ENCODE measurements at regions of chr16 and their contacts with region 1.

Region 1: DNA sequence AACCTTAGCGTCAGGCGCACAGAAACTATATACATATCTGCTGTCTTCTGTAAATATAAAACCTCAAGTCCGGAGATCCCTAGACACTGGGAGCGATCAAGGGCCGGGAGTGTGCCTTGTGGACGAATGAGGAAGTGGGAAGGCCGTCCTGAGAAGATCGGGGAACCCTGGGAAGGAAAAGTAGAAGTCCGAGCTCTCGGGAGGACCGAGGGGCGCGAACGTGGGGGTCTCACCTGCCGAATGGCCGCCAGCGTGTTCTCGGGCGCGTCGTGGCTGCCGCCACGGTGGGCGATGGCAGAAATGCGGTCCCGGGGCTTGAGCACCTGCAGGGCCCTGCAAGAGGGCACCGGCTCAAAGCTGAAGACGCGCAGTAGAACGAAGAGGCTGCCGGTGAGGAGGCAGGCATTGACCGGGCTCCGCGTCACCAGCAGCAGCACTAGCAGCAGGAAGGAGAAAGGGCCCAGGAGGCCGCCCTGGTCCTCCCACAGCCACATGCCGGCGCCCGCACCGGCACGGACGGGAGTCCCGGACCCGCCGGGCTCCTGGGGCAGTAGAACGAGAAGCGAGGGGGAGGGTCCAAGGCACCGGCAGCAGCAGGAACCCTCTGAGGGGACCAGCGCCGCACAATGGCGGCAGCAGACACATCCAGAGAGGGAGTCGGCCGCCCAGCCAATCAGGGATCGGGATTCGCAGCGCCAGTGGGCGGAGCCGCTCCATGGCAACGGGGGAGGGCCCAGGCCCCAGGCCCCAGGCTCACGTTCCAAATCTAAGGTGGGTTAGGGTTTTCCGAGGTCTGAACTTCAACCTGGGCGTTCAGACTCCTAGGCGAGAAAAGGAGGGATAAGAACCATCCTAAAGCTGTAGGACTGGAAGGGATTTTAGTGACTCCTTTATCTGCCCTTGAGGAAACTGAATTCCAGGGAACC is at the start of gene GDE1:
- DNase-seq: peak; percentile 91
- ATAC-seq: peak; percentile 78
- H3K4me3 ChIP-seq: peak within 1 kb of the TSS; percentile 56 to 87 (median 79)
- H3K4me3 Mint-ChIP-seq: peak within 1 kb of the TSS; percentile 95
- H3K27ac ChIP-seq: peak within 1 kb of the TSS; percentile 39 to 75
- H3K27ac Mint-ChIP-seq: peak within 1 kb of the TSS; percentile 89
- H3K4me1 ChIP-seq: peaks cover 19 to 37% of the 10 kb centered on the region in 2 donors
- H3K4me1 Mint-ChIP-seq: peaks cover 37% of the 10 kb centered on the region
- H3K27me3 ChIP-seq: no peaks in the 10 kb centered on the region
- H3K27me3 Mint-ChIP-seq: no peaks in the 10 kb centered on the region
- CTCF ChIP-seq: peak; percentile 21
- total RNA-seq, gene GDE1: 24.1 and 25.3 TPM in 2 replicates

Region 2: DNA sequence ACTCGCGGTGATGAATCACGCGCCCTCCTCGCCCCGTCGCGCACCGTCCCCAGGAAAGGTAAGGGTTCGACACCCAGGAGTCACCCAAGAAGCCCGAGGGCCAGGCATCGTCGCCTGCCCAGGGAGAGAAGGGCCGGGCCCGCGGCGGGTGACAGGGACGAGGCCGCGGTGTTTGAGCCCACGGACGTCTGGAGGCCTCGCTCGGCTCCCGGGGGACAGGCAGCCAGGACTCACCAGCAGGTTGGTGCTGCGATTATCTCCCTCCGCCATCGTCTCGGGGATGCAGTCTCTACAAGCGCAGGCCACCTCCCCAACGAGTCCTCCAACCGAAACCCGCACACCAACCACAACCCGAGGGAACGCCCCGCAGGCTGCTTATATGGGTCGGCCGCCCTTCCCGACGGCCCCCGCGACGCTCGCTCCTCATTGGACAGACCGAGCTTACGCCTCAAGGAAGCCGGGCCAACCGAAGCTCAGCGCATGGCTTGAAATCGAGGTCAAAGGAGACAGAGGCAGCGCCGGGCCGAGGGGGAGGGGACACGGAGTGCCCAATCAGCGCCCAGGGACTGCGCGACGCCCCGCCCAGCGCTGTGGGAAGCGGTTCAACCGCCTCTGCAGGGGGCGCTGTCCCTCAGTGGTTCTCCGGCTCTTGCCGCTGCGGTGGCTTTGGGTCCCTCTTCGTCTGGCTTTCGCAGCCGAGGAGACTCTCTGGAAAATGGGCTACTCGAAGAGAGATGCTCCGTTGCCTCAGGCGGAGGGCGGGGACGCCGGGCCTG is 720.3 kb before region 1 on chr16 and contains the start of gene ARL6IP1:
- CTCF ChIA-PET with region 1: no interaction called
- POLR2A ChIA-PET with region 1: no interaction called
- intact Hi-C with region 1: loop called (anchors 1 kb)
- DNase-seq: peak; percentile 100
- ATAC-seq: peak; percentile 96
- H3K4me3 ChIP-seq: peak within 1 kb of the TSS; percentile 76 to 94 (median 85)
- H3K4me3 Mint-ChIP-seq: peak within 1 kb of the TSS; percentile 92
- H3K27ac ChIP-seq: peak within 1 kb of the TSS; percentile 92 to 95
- H3K27ac Mint-ChIP-seq: peak within 1 kb of the TSS; percentile 95
- H3K4me1 ChIP-seq: peaks cover 16 to 21% of the 10 kb centered on the region in 2 donors
- H3K4me1 Mint-ChIP-seq: peaks cover 38% of the 10 kb centered on the region
- H3K27me3 ChIP-seq: no peaks in the 10 kb centered on the region
- H3K27me3 Mint-ChIP-seq: no peaks in the 10 kb centered on the region
- CTCF ChIP-seq: peak; percentile 96
- total RNA-seq, gene ARL6IP1: 106 and 109 TPM in 2 replicates

Region 3: GRCh38 chr16:18932243-18932981 is 589.3 kb before region 1 on chr16:
- CTCF ChIA-PET with region 1: no interaction called
- POLR2A ChIA-PET with region 1: no interaction called
- intact Hi-C with region 1: loop called (anchors 5 kb)
- DNase-seq: no peak
- ATAC-seq: no peak
- H3K4me3 ChIP-seq: no peak overlapping the region
- H3K4me3 Mint-ChIP-seq: peak overlapping the region; percentile 26
- H3K27ac ChIP-seq: peak overlapping the region in 1 of 2 donors; percentile 63
- H3K27ac Mint-ChIP-seq: peak overlapping the region; percentile 69
- H3K4me1 ChIP-seq: peaks cover 0 to 3% of the 10 kb centered on the region in 2 donors
- H3K4me1 Mint-ChIP-seq: peaks cover 19% of the 10 kb centered on the region
- H3K27me3 ChIP-seq: no peaks in the 10 kb centered on the region
- H3K27me3 Mint-ChIP-seq: peaks cover under 1% of the 10 kb centered on the region
- CTCF ChIP-seq: no peak

Region 4: GRCh38 chr16:19044769-19045168 is 477.0 kb before region 1 on chr16:
- CTCF ChIA-PET with region 1: no interaction called
- POLR2A ChIA-PET with region 1: no interaction called
- intact Hi-C with region 1: no loop called
- DNase-seq: no peak
- ATAC-seq: no peak
- H3K4me3 ChIP-seq: no peak overlapping the region
- H3K4me3 Mint-ChIP-seq: no peak overlapping the region
- H3K27ac ChIP-seq: no peak overlapping the region
- H3K27ac Mint-ChIP-seq: no peak overlapping the region
- H3K4me1 ChIP-seq: no peaks in the 10 kb centered on the region
- H3K4me1 Mint-ChIP-seq: no peaks in the 10 kb centered on the region
- H3K27me3 ChIP-seq: no peaks in the 10 kb centered on the region
- H3K27me3 Mint-ChIP-seq: peaks cover 6% of the 10 kb centered on the region
- CTCF ChIP-seq: no peak

Region 5: DNA sequence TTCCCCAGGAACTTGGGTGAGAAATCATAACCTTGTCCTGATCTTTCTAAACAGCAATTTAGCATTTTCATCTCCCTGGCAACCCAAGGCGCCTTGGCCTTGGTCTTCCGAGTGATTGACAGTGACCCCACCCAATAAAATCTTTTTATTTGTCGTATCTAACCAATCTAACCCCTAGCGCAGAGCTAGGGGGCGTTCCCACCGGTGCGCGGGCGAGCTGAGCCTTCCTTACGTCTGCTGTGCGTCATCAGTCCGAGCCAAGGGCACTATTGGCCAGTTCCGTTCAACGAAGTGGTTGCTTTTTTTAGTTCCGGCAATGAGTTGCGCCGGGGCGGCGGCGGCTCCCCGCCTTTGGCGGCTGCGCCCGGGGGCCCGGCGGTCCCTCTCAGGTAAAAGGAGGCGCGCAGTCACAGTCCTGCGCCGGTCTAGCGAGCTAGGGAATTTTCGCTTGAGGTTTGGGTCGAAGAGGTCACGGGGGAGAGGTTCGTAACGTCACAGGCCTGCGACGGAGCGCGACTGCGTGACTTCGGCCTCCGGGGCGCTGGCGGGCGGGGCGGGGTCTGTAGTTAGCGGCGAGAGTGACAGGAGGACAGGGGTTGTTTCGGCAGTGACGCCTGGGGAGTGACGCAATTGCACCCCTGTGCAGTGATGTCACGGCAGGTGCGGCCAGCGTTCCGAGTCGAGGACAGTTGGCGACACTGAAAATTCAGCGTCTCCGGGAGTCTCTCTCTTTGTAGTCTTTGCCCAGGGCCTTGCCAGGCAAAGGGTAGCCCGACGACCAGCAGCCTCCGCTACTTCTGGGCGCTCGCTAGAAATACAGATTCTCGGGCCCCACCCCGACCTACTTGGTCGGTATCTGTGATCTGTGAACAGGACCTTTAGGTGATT is 454.1 kb before region 1 on chr16 and contains the start of gene COQ7:
- CTCF ChIA-PET with region 1: interaction called, 3 read pairs
- POLR2A ChIA-PET with region 1: no interaction called
- intact Hi-C with region 1: loop called (anchors 1 kb)
- DNase-seq: peak; percentile 100
- ATAC-seq: peak; percentile 90
- H3K4me3 ChIP-seq: peak within 1 kb of the TSS; percentile 78 to 91 (median 79)
- H3K4me3 Mint-ChIP-seq: peak within 1 kb of the TSS; percentile 91
- H3K27ac ChIP-seq: peak within 1 kb of the TSS; percentile 99 to 100
- H3K27ac Mint-ChIP-seq: peak within 1 kb of the TSS; percentile 99
- H3K4me1 ChIP-seq: peaks cover 8 to 14% of the 10 kb centered on the region in 2 donors
- H3K4me1 Mint-ChIP-seq: peaks cover 14% of the 10 kb centered on the region
- H3K27me3 ChIP-seq: no peaks in the 10 kb centered on the region
- H3K27me3 Mint-ChIP-seq: peaks cover 8% of the 10 kb centered on the region
- CTCF ChIP-seq: no peak
- total RNA-seq, gene COQ7: 19.4 and 19.5 TPM in 2 replicates

Region 6: DNA sequence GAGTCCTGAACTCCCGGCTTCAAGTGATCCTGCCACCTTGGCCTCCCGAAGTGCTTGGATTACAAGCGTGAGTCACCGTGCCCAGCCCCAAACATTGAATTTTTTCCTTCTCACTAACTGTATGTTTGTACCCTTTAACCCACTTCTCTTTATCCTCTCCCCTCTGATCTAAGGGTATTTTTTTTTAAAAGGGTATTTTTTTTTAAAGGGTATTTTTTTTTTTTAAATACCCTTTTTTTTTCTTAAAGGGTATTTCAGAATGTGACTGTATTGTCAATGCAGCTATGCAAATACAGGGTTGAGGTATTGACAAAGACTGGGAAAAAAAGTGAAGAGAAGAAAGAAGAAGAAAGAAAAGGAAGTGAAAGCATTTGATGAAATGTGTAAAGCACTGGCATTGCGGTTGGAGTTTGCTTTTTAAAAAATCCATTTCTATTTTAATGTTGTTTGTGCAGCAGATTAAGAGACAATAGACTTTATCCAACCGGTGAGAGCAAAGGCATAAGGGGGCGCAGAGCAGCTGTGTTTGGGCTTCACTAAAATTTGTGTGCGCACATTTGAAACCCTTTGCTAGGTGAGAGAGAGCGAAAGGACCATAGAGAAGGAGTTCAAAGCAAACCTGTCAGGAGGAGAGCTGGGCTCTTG is 311.3 kb before region 1 on chr16:
- CTCF ChIA-PET with region 1: no interaction called
- POLR2A ChIA-PET with region 1: no interaction called
- intact Hi-C with region 1: loop called (anchors 2 kb)
- DNase-seq: peak; percentile 85
- ATAC-seq: peak; percentile 73
- H3K4me3 ChIP-seq: peak overlapping the region in 4 of 5 experiments; percentile 32 to 63 (median 48)
- H3K4me3 Mint-ChIP-seq: peak overlapping the region; percentile 85
- H3K27ac ChIP-seq: peak overlapping the region; percentile 96
- H3K27ac Mint-ChIP-seq: peak overlapping the region; percentile 95
- H3K4me1 ChIP-seq: peaks cover 41 to 71% of the 10 kb centered on the region in 2 donors
- H3K4me1 Mint-ChIP-seq: peaks cover 60% of the 10 kb centered on the region
- H3K27me3 ChIP-seq: no peaks in the 10 kb centered on the region
- H3K27me3 Mint-ChIP-seq: no peaks in the 10 kb centered on the region
- CTCF ChIP-seq: no peak

Region 7: DNA sequence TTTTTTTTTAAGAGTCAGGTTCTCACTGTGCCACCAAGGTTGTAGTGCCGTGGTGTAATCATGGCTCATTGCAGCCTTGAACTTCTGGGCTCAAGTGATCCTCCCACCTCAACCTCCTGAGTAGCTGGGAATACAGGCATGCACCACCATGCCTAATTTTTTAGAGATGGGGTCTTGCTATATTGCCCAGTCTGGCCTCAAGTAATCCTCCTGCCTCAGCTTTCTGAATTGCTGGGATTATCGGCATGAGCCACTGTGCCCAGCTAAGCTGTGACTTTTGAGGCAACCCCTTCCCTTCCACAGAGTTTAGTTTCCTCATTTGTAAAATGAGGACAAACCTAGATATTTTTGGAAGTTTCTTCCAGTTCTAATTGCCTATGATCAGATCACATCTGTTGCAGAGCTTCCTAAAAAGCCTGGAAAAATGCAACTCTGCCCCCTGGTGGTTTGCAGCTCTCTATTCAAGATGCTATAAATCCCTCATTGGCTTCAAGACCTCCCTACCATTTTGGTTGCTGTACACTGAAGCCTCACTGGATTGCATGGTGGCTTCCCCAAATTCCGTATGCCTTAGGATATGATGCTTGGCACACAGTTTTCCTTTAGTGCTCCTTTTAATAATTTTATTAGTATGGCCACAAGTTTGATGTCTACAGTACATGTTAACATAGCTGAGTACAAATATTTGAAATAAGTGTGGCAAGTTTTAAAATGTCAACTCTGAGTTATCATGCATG is 19.2 kb before region 1 on chr16:
- CTCF ChIA-PET with region 1: interaction called, 15 read pairs
- POLR2A ChIA-PET with region 1: no interaction called
- intact Hi-C with region 1: no loop called
- DNase-seq: peak; percentile 76
- ATAC-seq: no peak
- H3K4me3 ChIP-seq: no peak overlapping the region
- H3K4me3 Mint-ChIP-seq: no peak overlapping the region
- H3K27ac ChIP-seq: no peak overlapping the region
- H3K27ac Mint-ChIP-seq: no peak overlapping the region
- H3K4me1 ChIP-seq: no peaks in the 10 kb centered on the region
- H3K4me1 Mint-ChIP-seq: no peaks in the 10 kb centered on the region
- H3K27me3 ChIP-seq: no peaks in the 10 kb centered on the region
- H3K27me3 Mint-ChIP-seq: no peaks in the 10 kb centered on the region
- CTCF ChIP-seq: peak; percentile 83

Region 8: DNA sequence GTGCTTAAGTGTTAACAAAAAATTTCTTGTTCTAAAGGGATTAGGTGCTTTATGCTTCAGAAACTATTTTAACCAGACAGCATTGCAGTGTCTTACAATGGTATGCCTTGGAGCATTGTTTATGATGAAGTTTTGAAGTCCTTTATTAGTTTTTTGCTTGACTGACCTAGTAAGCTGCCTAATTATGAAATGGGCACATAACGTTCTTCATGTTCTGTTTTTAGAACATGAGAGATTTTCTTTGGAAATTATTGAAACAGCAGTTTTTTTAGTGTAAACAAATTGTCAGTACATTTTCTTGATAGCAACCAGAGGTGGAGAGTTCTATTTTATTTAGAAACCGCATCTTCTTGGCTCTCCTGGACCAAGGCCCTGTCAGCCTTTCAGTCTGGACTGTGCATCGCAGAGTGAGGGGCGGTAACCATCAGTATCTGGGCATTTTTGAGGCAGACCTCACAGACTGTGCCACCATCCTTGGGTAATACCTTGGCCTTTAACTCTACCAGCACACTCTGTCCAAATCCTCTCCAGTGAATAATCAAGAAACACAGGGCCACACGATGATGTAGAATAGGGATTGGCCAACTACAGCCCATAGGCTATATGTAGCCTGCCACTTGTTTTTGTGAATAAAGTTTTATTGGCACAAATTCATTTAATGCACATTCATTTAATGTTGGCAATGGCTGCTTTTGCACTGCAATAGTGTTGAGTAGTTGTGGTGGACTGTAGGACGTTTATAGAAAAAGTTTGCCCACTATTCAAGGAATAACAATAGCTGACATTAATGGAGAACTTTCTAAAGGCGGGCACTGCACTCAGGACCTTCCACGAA is 114.9 kb after region 1 on chr16:
- CTCF ChIA-PET with region 1: no interaction called
- POLR2A ChIA-PET with region 1: no interaction called
- intact Hi-C with region 1: no loop called
- DNase-seq: no peak
- ATAC-seq: no peak
- H3K4me3 ChIP-seq: no peak overlapping the region
- H3K4me3 Mint-ChIP-seq: no peak overlapping the region
- H3K27ac ChIP-seq: no peak overlapping the region
- H3K27ac Mint-ChIP-seq: no peak overlapping the region
- H3K4me1 ChIP-seq: no peaks in the 10 kb centered on the region
- H3K4me1 Mint-ChIP-seq: no peaks in the 10 kb centered on the region
- H3K27me3 ChIP-seq: no peaks in the 10 kb centered on the region
- H3K27me3 Mint-ChIP-seq: no peaks in the 10 kb centered on the region
- CTCF ChIP-seq: no peak

Region 9: GRCh38 chr16:20741554-20742285 is 1220.0 kb after region 1 on chr16 and contains the start of gene THUMPD1:
- CTCF ChIA-PET with region 1: no interaction called
- POLR2A ChIA-PET with region 1: no interaction called
- intact Hi-C with region 1: loop called (anchors 10 kb)
- DNase-seq: peak; percentile 96
- ATAC-seq: peak; percentile 91
- H3K4me3 ChIP-seq: peak within 1 kb of the TSS; percentile 74 to 100 (median 90)
- H3K4me3 Mint-ChIP-seq: peak within 1 kb of the TSS; percentile 95
- H3K27ac ChIP-seq: peak within 1 kb of the TSS; percentile 90 to 97
- H3K27ac Mint-ChIP-seq: peak within 1 kb of the TSS; percentile 97
- H3K4me1 ChIP-seq: peaks cover 19 to 23% of the 10 kb centered on the region in 2 donors
- H3K4me1 Mint-ChIP-seq: peaks cover 22% of the 10 kb centered on the region
- H3K27me3 ChIP-seq: no peaks in the 10 kb centered on the region
- H3K27me3 Mint-ChIP-seq: no peaks in the 10 kb centered on the region
- CTCF ChIP-seq: no peak
- total RNA-seq, gene THUMPD1: 52.5 and 54.3 TPM in 2 replicates

Measured in B cell (primary cell).